Mammary epithelial cell (primary cell): ENCODE measurements at regions of chr10 and their contacts with region 1.

Region 1: DNA sequence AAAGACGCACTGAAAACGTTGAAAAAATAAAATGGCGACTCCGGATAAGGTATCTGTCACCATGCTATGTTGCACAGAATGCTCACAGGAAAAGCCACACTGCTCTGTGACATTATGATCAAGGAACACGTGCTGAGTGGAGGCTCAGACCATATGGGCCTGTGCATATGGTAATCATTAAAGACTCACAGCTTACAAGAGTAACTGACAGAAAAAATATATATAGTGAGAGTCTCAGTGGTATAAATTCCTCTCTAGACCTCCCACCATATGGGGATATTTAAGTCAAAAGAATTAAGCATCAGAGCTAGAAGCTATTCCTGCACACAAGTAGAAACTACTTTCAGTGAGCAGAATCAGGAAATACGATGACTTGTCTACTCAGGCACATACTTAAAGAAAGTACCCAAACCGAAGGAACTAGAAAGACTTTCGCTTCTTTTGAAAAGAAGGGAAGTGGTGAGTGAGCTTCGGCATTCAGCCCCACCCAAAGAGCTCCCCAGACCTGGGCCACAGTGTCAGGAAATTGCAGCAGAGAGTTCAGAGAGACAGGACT is 65.1 kb upstream of the MPP7 start:
- DNase-seq: no peak
- H3K4me3 ChIP-seq: no peak overlapping the region
- H3K27ac ChIP-seq: no peak overlapping the region
- H3K4me1 ChIP-seq: no peaks in the 10 kb centered on the region
- H3K27me3 ChIP-seq: no peaks in the 10 kb centered on the region
- CTCF ChIP-seq: no peak

Region 2: GRCh38 chr10:27724287-27724686 is 643.7 kb before region 1 on chr10:
- CTCF ChIA-PET with region 1: no interaction called
- dilution Hi-C with region 1: no loop called
- in situ Hi-C with region 1: no loop called
- intact Hi-C with region 1: no loop called
- DNase-seq: no peak
- H3K4me3 ChIP-seq: no peak overlapping the region
- H3K27ac ChIP-seq: no peak overlapping the region
- H3K4me1 ChIP-seq: no peaks in the 10 kb centered on the region
- H3K27me3 ChIP-seq: peaks cover 4% of the 10 kb centered on the region
- CTCF ChIP-seq: peak; percentile 28 to 30

Region 3: DNA sequence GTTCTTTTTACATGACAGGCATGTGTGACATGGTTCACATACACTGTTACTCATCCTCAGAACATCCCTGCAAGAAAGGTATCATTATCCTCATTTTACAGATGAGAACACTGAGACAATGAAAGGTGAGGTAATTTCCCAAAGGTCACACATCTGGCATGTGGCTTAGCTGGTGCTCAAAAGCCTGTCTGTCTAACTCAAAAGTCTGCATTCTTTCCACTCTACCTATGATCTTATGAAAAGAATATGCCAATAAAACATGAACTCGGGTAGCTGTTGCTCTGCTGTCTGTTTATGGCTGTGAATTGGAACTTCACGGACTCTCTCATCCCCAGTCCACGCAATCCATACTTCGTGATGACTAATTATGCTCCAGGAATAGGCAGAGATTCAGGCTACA is 290.1 kb before region 1 on chr10:
- CTCF ChIA-PET with region 1: no interaction called
- dilution Hi-C with region 1: no loop called
- in situ Hi-C with region 1: no loop called
- intact Hi-C with region 1: no loop called
- DNase-seq: peak; percentile 79
- H3K4me3 ChIP-seq: no peak overlapping the region
- H3K27ac ChIP-seq: no peak overlapping the region
- H3K4me1 ChIP-seq: peaks cover 9% of the 10 kb centered on the region
- H3K27me3 ChIP-seq: no peaks in the 10 kb centered on the region
- CTCF ChIP-seq: no peak

Region 4: GRCh38 chr10:28418069-28418468 is 50.1 kb after region 1 on chr10:
- CTCF ChIA-PET with region 1: no interaction called
- dilution Hi-C with region 1: no loop called
- in situ Hi-C with region 1: no loop called
- intact Hi-C with region 1: no loop called
- DNase-seq: no peak
- H3K4me3 ChIP-seq: no peak overlapping the region
- H3K27ac ChIP-seq: no peak overlapping the region
- H3K4me1 ChIP-seq: no peaks in the 10 kb centered on the region
- H3K27me3 ChIP-seq: no peaks in the 10 kb centered on the region
- CTCF ChIP-seq: no peak

Region 5: GRCh38 chr10:28432210-28432676 is 64.2 kb after region 1 on chr10:
- CTCF ChIA-PET with region 1: no interaction called
- dilution Hi-C with region 1: loop called (anchors 5 kb)
- in situ Hi-C with region 1: no loop called
- intact Hi-C with region 1: no loop called
- DNase-seq: peak; percentile 43
- H3K4me3 ChIP-seq: no peak overlapping the region
- H3K27ac ChIP-seq: no peak overlapping the region
- H3K4me1 ChIP-seq: no peaks in the 10 kb centered on the region
- H3K27me3 ChIP-seq: no peaks in the 10 kb centered on the region
- CTCF ChIP-seq: peak; percentile 69 to 82

Region 6: DNA sequence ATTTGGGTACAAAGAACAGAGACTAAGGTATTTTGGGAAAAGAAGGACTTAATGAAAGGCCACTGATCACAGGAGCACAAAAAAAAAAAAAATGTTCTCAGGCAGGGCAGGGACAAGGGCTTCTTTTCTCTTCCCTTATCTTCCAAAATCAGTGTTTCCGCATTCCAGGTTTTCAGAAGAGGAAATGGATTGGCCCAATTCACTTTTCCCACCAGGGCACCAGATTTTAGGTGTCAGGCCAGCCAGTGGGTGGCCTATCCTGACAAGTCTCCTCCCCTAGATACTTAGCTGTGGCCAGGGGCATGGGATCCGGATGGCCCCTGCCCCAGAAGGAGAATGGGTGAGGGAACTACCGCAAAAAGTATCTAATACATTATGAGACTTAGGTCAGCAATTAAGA is 76.0 kb after region 1 on chr10:
- CTCF ChIA-PET with region 1: no interaction called
- dilution Hi-C with region 1: no loop called
- in situ Hi-C with region 1: no loop called
- intact Hi-C with region 1: no loop called
- DNase-seq: no peak
- H3K4me3 ChIP-seq: no peak overlapping the region
- H3K27ac ChIP-seq: no peak overlapping the region
- H3K4me1 ChIP-seq: no peaks in the 10 kb centered on the region
- H3K27me3 ChIP-seq: no peaks in the 10 kb centered on the region
- CTCF ChIP-seq: no peak